Activated B cell treated with CpG ODN at 0.5 μM for 24 hours (primary cell): ENCODE measurements at regions of chr7 and their contacts with region 1.

Region 1: DNA sequence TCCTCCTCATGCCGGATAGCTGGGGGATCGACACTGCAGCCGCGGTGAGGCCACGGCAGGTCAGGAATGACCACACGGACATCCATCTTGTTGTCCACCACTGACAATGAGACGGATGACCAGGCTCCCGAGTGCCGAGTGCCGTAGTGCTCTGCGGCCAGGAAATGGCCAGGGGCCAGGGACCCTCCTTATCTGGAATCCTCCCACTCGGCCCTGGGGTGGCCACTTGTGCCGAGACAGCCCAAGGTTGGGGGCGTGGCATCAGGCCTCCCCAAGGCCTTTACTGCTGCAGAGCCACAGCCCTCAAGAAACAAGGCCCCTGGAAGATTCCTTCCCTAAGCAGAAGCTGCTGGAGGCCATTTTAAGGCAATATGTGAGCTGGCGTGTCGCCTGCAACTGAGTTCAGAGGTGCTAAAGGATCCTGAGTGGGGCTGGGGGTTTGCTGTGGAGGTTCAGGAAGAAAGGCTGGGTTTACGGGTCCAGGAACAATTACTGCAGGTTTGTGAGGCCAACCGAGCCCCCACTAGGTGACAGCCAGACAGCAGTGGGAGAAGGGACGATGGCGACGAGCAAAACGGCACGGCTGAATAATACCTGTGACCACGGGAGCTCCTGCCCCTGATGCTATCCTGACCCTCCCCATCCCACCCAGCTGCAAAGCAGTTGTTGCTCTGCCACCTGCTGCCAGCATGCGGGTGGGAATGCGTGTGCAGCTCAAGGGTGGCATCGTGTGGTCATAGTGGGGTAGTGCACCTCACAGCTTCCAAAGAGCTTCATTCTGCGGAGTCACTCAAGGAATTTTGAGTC is 31.6 kb upstream of the LEP start:
- DNase-seq: peak; percentile 56
- ATAC-seq: peak; percentile 91
- H3K4me3 Mint-ChIP-seq: no peak overlapping the region
- H3K27ac Mint-ChIP-seq: no peak overlapping the region
- H3K4me1 Mint-ChIP-seq: no peaks in the 10 kb centered on the region
- H3K27me3 Mint-ChIP-seq: peaks cover 24% of the 10 kb centered on the region
- CTCF ChIP-seq: peak; percentile 93

Region 2: DNA sequence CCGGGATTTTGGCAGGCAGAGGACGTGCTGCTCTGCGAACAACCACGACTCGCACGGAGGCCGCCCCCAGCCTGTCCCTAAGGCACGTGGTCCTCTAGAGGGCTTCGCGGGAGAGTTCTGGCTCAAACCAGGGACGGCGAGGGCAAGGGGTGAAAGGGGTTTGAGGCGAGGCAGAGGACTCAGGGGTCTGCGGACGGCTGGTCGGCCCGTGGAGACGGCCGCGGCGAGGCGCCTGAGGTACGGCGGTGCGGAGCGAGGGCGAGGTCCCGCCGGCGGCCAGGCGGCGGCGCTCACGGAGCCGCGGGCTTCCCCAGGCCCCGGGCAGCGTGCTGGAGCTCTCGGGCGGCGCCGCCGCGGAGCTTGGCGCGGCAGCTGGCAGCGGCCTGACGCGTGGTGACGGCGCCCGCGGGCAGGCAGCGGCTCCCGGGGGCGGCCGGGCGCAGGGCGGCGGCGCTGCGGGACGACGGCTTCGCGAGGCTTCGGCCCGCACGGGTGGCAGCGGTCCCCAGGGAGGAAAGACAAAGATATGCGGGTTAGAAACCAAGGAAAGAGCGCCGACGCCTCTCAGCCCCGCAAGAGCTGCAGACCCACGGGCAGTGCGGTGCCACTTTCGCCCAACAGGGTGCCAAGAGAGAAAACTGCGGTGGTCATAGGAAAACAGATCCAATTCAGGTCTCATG is 861.7 kb before region 1 on chr7:
- CTCF ChIA-PET with region 1: no interaction called
- POLR2A ChIA-PET with region 1: no interaction called
- intact Hi-C with region 1: loop called (anchors 5 kb)
- DNase-seq: peak; percentile 73
- ATAC-seq: peak; percentile 98
- H3K4me3 Mint-ChIP-seq: peak overlapping the region; percentile 68
- H3K27ac Mint-ChIP-seq: no peak overlapping the region
- H3K4me1 Mint-ChIP-seq: peaks cover 16% of the 10 kb centered on the region
- H3K27me3 Mint-ChIP-seq: no peaks in the 10 kb centered on the region
- CTCF ChIP-seq: no peak

Region 3: DNA sequence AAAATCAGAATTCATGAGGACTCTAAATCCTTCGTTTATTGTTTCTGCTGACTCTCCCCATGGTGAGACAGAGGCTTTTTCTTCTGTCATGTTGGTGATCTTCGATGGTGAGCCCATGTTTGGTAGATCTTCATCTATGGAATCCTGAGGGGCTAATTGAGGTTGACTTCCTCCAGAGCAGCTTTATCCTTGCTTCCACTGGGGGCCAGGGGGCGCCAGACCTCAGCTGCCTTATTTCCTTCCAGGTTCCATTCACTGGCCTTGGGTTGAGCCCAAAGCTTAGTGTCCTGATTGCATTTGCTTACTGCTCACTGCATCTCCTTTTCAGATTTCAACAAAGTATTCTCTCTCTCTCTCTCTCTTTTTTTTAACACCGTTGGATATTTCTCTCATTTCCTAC is 704.7 kb before region 1 on chr7:
- CTCF ChIA-PET with region 1: interaction called, 16 read pairs
- POLR2A ChIA-PET with region 1: no interaction called
- intact Hi-C with region 1: no loop called
- DNase-seq: no peak
- ATAC-seq: no peak
- H3K4me3 Mint-ChIP-seq: no peak overlapping the region
- H3K27ac Mint-ChIP-seq: no peak overlapping the region
- H3K4me1 Mint-ChIP-seq: no peaks in the 10 kb centered on the region
- H3K27me3 Mint-ChIP-seq: peaks cover 21% of the 10 kb centered on the region
- CTCF ChIP-seq: no peak

Region 4: GRCh38 chr7:127708788-127709187 is 500.6 kb before region 1 on chr7:
- CTCF ChIA-PET with region 1: interaction called, 293 read pairs
- POLR2A ChIA-PET with region 1: interaction called, 11 read pairs
- intact Hi-C with region 1: loop called (anchors 1 kb)
- DNase-seq: no peak
- ATAC-seq: peak; percentile 85
- H3K4me3 Mint-ChIP-seq: no peak overlapping the region
- H3K27ac Mint-ChIP-seq: no peak overlapping the region
- H3K4me1 Mint-ChIP-seq: no peaks in the 10 kb centered on the region
- H3K27me3 Mint-ChIP-seq: no peaks in the 10 kb centered on the region
- CTCF ChIP-seq: no peak

Region 5: GRCh38 chr7:128135515-128136214 is 73.8 kb before region 1 on chr7:
- CTCF ChIA-PET with region 1: interaction called, 123 read pairs
- POLR2A ChIA-PET with region 1: no interaction called
- intact Hi-C with region 1: loop called (anchors 1 kb)
- DNase-seq: peak; percentile 81
- ATAC-seq: peak; percentile 96
- H3K4me3 Mint-ChIP-seq: peak overlapping the region; percentile 82
- H3K27ac Mint-ChIP-seq: no peak overlapping the region
- H3K4me1 Mint-ChIP-seq: peaks cover 22% of the 10 kb centered on the region
- H3K27me3 Mint-ChIP-seq: peaks cover 20% of the 10 kb centered on the region
- CTCF ChIP-seq: peak; percentile 97